Ovary (tissue), 10 donors: ENCODE measurements at regions of chr4 and their contacts with region 1.

Region 1: DNA sequence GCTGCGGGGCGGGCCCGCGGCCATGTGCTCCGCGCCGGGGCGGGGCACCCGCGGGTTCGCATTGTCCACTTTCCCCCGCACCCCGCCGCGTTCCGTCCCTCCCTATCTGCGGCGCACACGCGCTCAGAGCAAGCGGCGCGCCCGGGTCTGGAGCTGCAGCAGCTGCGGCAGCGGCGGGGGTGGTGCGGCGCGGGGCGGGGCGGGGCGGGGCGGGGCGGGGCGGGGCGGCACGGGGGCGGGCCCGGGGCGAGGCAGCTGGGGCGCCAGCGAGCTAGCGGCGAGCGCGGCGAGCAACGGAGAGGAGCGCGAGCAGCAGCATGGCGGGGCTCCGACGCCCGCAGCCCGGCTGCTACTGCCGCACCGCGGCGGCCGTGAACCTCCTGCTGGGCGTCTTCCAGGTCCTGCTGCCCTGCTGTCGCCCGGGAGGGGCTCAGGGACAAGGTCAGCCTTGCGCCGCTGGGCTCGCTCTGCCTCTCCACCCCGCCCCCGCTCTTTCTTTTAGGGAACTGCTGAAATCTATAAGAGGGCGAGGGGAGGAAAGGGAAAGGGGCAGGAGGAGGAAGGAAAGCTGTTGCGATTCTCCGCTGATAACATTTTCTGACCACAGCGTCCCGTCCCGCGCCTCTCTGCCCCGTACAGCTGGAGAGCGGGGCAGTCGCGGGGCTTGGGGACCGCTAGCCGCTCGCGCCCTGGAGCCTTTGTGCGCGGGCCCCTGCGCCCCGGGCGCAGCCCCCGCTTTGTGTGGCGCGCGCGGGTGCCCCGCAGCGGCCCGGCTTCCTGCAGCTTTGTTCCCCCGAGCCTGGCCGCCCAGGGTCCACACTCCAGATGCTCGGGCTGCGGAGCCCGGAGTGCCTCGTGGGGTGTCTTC is at the start of gene TMEM131L:
- DNase-seq: peak; percentile 55 to 76 (median 74)
- H3K4me3 ChIP-seq: peak within 1 kb of the TSS; percentile 69
- H3K27ac ChIP-seq: peak within 1 kb of the TSS; percentile 59 to 68
- H3K4me1 ChIP-seq: peaks cover 3% of the 10 kb centered on the region
- H3K27me3 ChIP-seq: no peaks in the 10 kb centered on the region
- CTCF ChIP-seq: peak in 1 of 3 donors; percentile 33
- EP300 ChIP-seq: no peak
- POLR2A ChIP-seq: no peak
- total RNA-seq, gene TMEM131L: 7.7 to 13.1 (median 10.7) TPM

Region 2: GRCh38 chr4:153153339-153153871 is 312.9 kb before region 1 on chr4:
- intact Hi-C with region 1: loop called in 1 of 4 experiments (anchors 10 kb)
- DNase-seq: peak; percentile 15 to 55 (median 36)
- H3K4me3 ChIP-seq: peak overlapping the region; percentile 46
- H3K27ac ChIP-seq: no peak overlapping the region
- H3K4me1 ChIP-seq: peaks cover 1% of the 10 kb centered on the region
- H3K27me3 ChIP-seq: no peaks in the 10 kb centered on the region
- CTCF ChIP-seq: no peak
- EP300 ChIP-seq: no peak
- POLR2A ChIP-seq: no peak

Region 3: GRCh38 chr4:153344131-153345010 is 121.9 kb before region 1 on chr4 and contains the start of gene MND1:
- intact Hi-C with region 1: loop called in 1 of 4 experiments (anchors 10 kb)
- DNase-seq: peak; percentile 82 to 91 (median 88)
- H3K4me3 ChIP-seq: peak within 1 kb of the TSS; percentile 68
- H3K27ac ChIP-seq: no peak within 1 kb of the TSS
- H3K4me1 ChIP-seq: no peaks in the 10 kb centered on the region
- H3K27me3 ChIP-seq: no peaks in the 10 kb centered on the region
- CTCF ChIP-seq: peak; percentile 76 to 99 (median 78)
- EP300 ChIP-seq: no peak
- POLR2A ChIP-seq: no peak
- total RNA-seq, gene MND1: 0.28 to 0.67 (median 0.36) TPM in 3 of 7 donors, not detected in the others

Region 4: DNA sequence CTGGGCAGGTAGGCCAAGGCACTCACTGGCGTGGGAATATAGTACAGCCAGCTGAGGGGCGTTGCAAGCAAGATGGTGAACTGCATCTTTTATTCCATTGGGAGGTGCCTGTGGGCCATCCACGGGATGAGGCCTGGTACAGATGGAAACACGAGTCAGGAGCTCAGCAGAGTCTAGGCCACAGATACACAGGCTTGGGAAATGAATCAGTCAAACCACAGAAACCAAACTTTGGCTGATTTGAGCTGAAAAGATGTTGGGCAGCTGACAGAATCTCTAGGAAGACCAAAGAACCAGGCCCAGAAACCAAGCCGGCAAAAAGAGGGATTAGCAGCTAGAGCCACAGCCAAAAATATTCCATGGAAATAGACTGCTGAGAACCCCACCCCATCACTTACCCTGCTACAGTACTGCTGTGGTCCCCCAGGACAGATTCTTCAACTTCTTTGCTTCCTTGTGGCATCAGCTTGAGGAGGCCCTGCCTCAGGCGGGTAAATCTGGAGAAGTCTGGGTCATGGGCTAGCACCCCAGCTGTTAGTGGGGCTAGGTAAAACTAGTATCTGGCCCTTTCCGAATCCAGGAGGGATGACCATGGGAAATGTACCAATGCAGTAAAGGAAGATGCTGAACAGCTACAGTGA is 75.3 kb after region 1 on chr4:
- intact Hi-C with region 1: loop called in 1 of 4 experiments (anchors 10 kb)
- DNase-seq: no peak
- H3K4me3 ChIP-seq: no peak overlapping the region
- H3K27ac ChIP-seq: no peak overlapping the region
- H3K4me1 ChIP-seq: peaks cover 4% of the 10 kb centered on the region
- H3K27me3 ChIP-seq: no peaks in the 10 kb centered on the region
- CTCF ChIP-seq: no peak
- EP300 ChIP-seq: no peak
- POLR2A ChIP-seq: no peak

Region 5: DNA sequence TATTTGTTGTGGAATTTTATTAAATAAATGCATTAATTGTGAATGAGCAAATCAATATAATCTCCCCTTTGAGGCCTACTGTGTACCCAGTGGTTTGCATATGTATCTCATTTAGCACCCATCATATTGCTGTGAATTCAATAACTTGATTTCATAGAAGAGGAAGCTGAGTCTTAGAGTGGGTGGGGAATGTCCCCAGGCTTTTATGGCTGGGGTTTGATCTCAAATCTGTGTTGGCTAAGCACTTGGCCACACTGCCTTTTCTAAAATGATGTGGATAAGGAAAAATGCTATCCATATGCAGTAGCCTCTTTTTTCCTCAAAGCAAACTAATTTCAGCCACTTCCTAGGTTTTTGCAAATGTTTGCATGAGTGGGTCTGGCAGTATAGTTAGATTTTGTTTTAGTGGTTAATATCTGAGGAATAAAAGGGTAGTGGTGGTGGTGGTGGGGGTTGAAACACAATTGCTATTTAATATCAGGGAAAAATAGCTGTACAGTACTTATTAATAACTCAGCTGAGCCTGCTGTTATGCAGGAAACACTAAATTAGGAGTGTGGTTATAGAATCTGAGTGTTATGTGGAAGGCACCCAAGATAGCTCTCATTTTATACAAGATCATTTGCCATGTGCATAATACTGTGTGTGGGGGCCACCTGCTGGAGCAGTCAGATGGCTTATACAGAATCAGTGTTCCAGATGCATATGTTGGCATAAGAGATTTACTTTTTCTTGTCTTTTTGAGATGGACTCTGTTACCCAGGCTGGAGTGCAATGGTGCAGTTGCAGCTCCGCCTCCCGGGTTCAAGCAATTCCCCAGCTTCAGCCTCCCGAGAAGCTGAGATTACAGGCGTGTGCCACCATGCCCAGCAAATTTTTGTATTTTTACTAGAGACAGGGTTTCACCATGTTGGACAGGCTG is 107.8 kb after region 1 on chr4:
- intact Hi-C with region 1: loop called in 3 of 4 experiments (anchors 2 to 5 kb)
- DNase-seq: peak; percentile 41 to 68 (median 59)
- H3K4me3 ChIP-seq: no peak overlapping the region
- H3K27ac ChIP-seq: no peak overlapping the region
- H3K4me1 ChIP-seq: peaks cover 6% of the 10 kb centered on the region
- H3K27me3 ChIP-seq: no peaks in the 10 kb centered on the region
- CTCF ChIP-seq: peak in 2 of 3 donors; percentile 44
- EP300 ChIP-seq: no peak
- POLR2A ChIP-seq: no peak